K562 (cell line): ENCODE measurements at regions of chr4 and their contacts with region 1.

Region 1: GRCh38 chr4:110005461-110006056 is 92.9 kb downstream of the EGF start:
- DNase-seq: peak; percentile 20 to 65 (median 40)
- ATAC-seq: peak; percentile 80
- H3K4me3 ChIP-seq: no peak overlapping the region
- H3K27ac ChIP-seq: no peak overlapping the region
- H3K4me1 ChIP-seq: 0 out of 5 replicates have a peak, but pooled peaks cover 0 to 2% of the 10 kb centered on the region in 2 experiments
- H3K27me3 ChIP-seq: no peaks in the 10 kb centered on the region
- CTCF ChIP-seq: peak; percentile 65 to 93 (median 68); a peak in 5 of 6 replicates
- EP300 ChIP-seq: no peak
- POLR2A ChIP-seq: no peak
- RAD21 ChIP-seq: peak; percentile 86 to 92

Region 2: GRCh38 chr4:109389369-109390114 is 616.0 kb before region 1 on chr4:
- CTCF ChIA-PET with region 1: no interaction called
- POLR2A ChIA-PET with region 1: no interaction called
- in situ Hi-C with region 1: no loop called
- intact Hi-C with region 1: no loop called
- DNase-seq: peak in 1 of 4 experiments; percentile 11
- ATAC-seq: peak; percentile 47
- H3K4me3 ChIP-seq: no peak overlapping the region
- H3K27ac ChIP-seq: no peak overlapping the region
- H3K4me1 ChIP-seq: peaks cover 0 to 5% of the 10 kb centered on the region in 2 experiments; a peak in 2 of 5 replicates
- H3K27me3 ChIP-seq: peaks cover 0 to under 1% of the 10 kb centered on the region in 2 experiments; a peak in 1 of 5 replicates
- CTCF ChIP-seq: no peak
- EP300 ChIP-seq: no peak
- POLR2A ChIP-seq: no peak
- RAD21 ChIP-seq: no peak

Region 3: DNA sequence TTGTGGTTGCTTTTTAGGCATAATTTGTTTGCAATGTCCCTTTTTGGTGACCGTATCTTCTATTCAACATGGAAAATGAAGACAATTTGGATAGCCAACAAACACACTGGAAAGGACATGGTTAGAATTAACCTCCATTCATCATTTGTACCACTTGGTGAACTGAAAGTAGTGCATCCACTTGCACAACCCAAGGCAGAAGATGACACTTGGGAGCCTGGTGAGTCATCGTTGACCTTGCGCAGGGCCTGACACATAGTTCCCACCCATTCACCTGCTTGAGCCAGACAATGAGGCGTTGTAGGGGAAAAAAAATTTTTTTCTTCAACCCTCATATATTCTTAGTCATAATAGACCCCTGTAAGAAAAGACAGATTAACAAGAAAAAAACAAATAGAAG is 60.5 kb before region 1 on chr4:
- CTCF ChIA-PET with region 1: no interaction called
- POLR2A ChIA-PET with region 1: no interaction called
- in situ Hi-C with region 1: no loop called
- intact Hi-C with region 1: no loop called
- DNase-seq: peak; percentile 14 to 64 (median 24)
- ATAC-seq: peak; percentile 71
- H3K4me3 ChIP-seq: no peak overlapping the region
- H3K27ac ChIP-seq: no peak overlapping the region
- H3K4me1 ChIP-seq: peaks cover 0 to 7% of the 10 kb centered on the region in 2 experiments; a peak in 3 of 5 replicates
- H3K27me3 ChIP-seq: no peaks in the 10 kb centered on the region; a peak in 1 of 5 replicates
- CTCF ChIP-seq: no peak
- EP300 ChIP-seq: no peak
- POLR2A ChIP-seq: no peak
- RAD21 ChIP-seq: no peak

Region 4: DNA sequence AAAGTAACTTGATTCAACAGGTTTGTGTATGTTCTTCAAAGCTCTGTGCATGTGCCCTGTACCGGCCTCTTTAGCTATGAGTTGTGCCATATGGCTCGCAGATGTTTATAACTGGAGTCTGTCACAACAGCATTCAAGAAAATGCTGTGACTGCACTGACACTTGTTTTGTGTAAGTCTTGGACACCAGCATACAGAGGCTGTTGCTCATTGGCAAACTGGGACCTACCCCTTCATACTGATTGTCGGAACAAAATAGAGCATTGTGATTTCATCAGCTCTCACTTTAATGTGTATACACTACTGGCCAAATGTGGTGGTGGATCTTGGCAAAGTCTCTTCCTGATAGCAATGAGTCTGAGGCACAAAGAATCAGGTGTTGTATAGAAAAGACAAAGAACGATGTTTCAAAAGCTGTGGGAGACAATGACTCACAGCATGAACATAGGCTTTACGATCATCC is 41.1 kb after region 1 on chr4:
- CTCF ChIA-PET with region 1: no interaction called
- POLR2A ChIA-PET with region 1: no interaction called
- in situ Hi-C with region 1: no loop called
- intact Hi-C with region 1: no loop called
- DNase-seq: no peak
- ATAC-seq: no peak
- H3K4me3 ChIP-seq: no peak overlapping the region
- H3K27ac ChIP-seq: no peak overlapping the region
- H3K4me1 ChIP-seq: no peaks in the 10 kb centered on the region
- H3K27me3 ChIP-seq: peaks cover 2 to 4% of the 10 kb centered on the region in 2 experiments; a peak in 1 of 5 replicates
- CTCF ChIP-seq: no peak
- EP300 ChIP-seq: no peak
- POLR2A ChIP-seq: no peak
- RAD21 ChIP-seq: no peak

Region 5: DNA sequence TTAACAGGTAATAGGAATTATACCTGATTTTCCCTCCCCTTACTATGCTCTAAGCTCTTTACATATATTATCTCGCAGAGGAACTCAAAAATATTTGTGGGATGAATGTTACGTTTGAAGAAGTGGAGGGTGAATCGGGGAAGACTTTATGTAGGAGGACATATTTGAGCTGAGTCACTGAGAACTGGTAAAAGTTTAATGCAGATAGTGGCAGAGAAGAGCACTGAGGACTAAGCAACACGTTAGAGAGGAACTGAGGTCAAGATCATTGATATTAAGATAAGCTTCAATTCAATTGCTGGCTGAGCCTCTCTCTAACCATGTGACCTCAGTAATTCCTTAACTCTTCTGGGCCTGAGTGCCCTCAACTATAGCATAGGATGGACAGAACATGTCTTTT is 219.3 kb after region 1 on chr4:
- CTCF ChIA-PET with region 1: no interaction called
- POLR2A ChIA-PET with region 1: no interaction called
- in situ Hi-C with region 1: no loop called
- intact Hi-C with region 1: loop called (anchors 5 kb)
- DNase-seq: peak in 2 of 4 experiments; percentile 21 to 33
- ATAC-seq: peak; percentile 77
- H3K4me3 ChIP-seq: no peak overlapping the region
- H3K27ac ChIP-seq: 0 out of 3 replicates have a peak overlapping the region, but pooled peaks have one; percentile 4
- H3K4me1 ChIP-seq: peaks cover 0 to 13% of the 10 kb centered on the region in 2 experiments; a peak in 3 of 5 replicates
- H3K27me3 ChIP-seq: no peaks in the 10 kb centered on the region
- CTCF ChIP-seq: no peak
- EP300 ChIP-seq: no peak
- POLR2A ChIP-seq: no peak
- RAD21 ChIP-seq: no peak

Region 6: DNA sequence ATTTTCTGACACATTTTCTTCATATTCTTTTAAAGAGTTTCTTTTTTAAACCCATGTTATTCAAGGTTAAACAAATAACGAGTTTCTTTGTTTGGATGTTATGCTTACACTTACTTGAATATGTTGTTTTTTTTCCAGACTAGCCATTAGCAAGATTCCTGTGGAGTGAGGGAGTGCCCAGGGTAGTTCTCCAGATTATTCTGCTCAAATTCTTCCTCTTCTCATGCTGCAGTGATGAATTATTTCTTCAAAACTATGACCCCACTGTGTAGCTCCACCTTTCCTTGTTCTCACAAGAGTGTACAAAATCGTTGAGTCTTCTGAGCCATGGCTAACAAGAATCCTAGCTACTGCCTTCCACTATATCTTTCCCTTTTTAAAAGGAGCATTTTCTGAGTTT is 326.9 kb after region 1 on chr4:
- CTCF ChIA-PET with region 1: no interaction called
- POLR2A ChIA-PET with region 1: no interaction called
- in situ Hi-C with region 1: loop called (anchors 10 kb)
- intact Hi-C with region 1: no loop called
- DNase-seq: no peak
- ATAC-seq: no peak
- H3K4me3 ChIP-seq: no peak overlapping the region
- H3K27ac ChIP-seq: no peak overlapping the region
- H3K4me1 ChIP-seq: no peaks in the 10 kb centered on the region
- H3K27me3 ChIP-seq: no peaks in the 10 kb centered on the region
- CTCF ChIP-seq: no peak
- EP300 ChIP-seq: no peak
- POLR2A ChIP-seq: no peak
- RAD21 ChIP-seq: no peak

Region 7: GRCh38 chr4:110510955-110511544 is 505.5 kb after region 1 on chr4:
- CTCF ChIA-PET with region 1: interaction called, 252 read pairs
- POLR2A ChIA-PET with region 1: no interaction called
- in situ Hi-C with region 1: no loop called
- intact Hi-C with region 1: loop called (anchors 1 kb)
- DNase-seq: peak; percentile 54 to 59 (median 58)
- ATAC-seq: peak; percentile 86
- H3K4me3 ChIP-seq: no peak overlapping the region
- H3K27ac ChIP-seq: no peak overlapping the region
- H3K4me1 ChIP-seq: no peaks in the 10 kb centered on the region
- H3K27me3 ChIP-seq: no peaks in the 10 kb centered on the region; a peak in 1 of 5 replicates
- CTCF ChIP-seq: peak; percentile 38 to 72 (median 41); a peak in 4 of 6 replicates
- EP300 ChIP-seq: no peak
- POLR2A ChIP-seq: no peak
- RAD21 ChIP-seq: peak; percentile 65 to 71